KBM-7 (cell line): ENCODE measurements at regions of chr17 and their contacts with region 1.

Region 1: DNA sequence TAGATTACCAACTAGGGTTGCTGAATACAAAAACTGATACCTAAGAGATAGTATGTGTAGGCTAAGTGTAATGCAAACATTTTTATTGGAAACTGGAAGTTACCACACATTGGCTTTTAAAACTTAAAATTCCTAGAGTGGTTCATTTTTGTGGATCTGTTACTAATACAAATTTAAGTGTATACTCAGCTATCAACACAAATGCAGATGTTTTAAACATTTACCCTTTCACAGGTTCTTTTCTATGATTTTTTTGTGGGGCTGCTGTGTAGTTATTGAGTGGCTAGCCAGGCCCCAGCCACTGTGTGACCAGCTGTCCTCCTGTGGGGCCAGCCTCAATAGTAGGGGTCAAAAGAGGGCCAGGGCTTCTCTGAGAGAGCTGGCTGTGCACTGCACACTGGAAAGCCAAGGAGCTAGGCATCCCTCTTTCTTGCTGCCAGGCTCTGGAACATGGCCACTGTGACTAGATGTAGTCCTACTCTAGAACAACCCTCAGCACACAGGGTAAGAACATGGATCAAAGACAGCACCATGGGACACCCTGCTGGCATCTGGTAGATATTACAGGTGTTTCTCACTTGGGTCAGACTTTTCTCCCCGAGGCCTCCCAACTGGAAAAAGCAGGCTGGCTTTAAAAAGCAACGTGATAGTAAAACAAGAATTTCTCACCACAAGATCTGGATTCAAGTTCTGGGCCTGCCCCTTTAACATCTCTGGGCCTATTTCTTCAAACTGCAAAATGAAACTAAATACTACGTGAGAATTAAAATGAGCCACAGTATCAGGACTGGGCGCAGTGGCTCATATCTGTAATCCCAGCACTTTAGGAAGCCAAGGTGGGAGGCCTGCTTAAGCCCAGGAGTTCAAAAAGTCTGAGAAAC is 7.3 kb upstream of the VEZF1 start:
- DNase-seq: peak; percentile 86

Region 2: DNA sequence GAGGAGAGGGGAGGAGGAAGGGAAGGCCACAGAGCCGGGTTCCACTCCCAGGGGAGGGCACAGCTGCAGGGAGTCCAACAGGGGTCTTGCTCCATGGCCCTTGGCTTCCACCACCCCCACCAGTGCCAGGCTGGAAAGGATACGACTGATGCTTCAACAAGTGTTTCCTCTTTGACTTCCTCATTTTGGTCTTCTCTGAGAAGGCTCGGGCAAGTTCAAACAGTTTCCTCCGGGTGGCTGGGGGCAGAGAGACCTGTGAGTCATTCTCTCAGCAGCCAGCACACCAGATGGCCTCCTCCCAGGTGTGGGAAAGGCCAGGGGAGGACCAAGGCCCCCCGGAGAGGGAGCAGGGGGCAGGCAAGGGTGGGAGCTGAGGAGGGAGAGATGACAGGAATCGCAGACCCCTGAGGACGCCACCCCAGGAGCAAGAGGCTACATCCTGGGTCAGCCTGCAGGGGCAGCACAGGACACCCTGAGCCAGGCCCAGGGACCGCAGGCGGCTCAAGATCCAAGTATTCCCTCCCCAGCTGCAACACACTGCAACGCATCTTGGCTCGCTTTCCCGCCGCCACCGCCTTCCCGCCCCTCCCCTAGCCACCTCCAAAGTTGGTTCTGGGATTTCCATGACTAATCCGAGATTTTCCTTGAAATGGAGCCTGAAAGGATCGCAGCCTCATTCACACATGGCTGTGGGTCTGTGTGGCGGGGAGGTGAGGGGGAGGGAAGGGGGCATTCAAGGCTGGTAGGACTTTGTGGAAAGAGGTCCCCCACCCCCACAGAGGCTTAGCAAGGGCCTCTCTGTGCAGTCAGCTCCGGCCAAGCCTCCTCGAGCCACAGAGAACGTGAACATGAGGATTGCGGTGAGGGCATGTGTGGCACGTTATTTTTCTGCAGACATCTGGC is 127.1 kb before region 1 on chr17:
- in situ Hi-C with region 1: loop called (anchors 10 kb)
- DNase-seq: peak; percentile 97